SK-N-SH (cell line): ENCODE measurements at regions of chr17 and their contacts with region 1.

Region 1: GRCh38 chr17:54992797-54993639 is 24.5 kb downstream of the STXBP4 start:
- DNase-seq: peak; percentile 59
- H3K4me3 ChIP-seq: no peak overlapping the region
- H3K27ac ChIP-seq: no peak overlapping the region
- H3K4me1 ChIP-seq: no peaks in the 10 kb centered on the region; a peak in 1 of 4 replicates
- H3K27me3 ChIP-seq: no peaks in the 10 kb centered on the region
- CTCF ChIP-seq: peak; percentile 96
- EP300 ChIP-seq: no peak
- RAD21 ChIP-seq: peak; percentile 91

Region 2: GRCh38 chr17:54972406-54973138 is 20.4 kb before region 1 on chr17:
- CTCF ChIA-PET with region 1: interaction called, 18 read pairs
- POLR2A ChIA-PET with region 1: no interaction called
- DNase-seq: no peak
- H3K4me3 ChIP-seq: no peak overlapping the region
- H3K27ac ChIP-seq: peak overlapping the region in 1 of 2 experiments; percentile 29; a peak in 1 of 4 replicates
- H3K4me1 ChIP-seq: peaks cover 0 to 22% of the 10 kb centered on the region in 2 experiments; a peak in 2 of 4 replicates
- H3K27me3 ChIP-seq: no peaks in the 10 kb centered on the region
- CTCF ChIP-seq: no peak
- EP300 ChIP-seq: no peak
- RAD21 ChIP-seq: no peak

Region 3: GRCh38 chr17:55005520-55005919 is 12.5 kb after region 1 on chr17:
- CTCF ChIA-PET with region 1: interaction called, 62 read pairs
- POLR2A ChIA-PET with region 1: no interaction called
- DNase-seq: peak; percentile 20
- H3K4me3 ChIP-seq: no peak overlapping the region
- H3K27ac ChIP-seq: no peak overlapping the region
- H3K4me1 ChIP-seq: no peaks in the 10 kb centered on the region
- H3K27me3 ChIP-seq: no peaks in the 10 kb centered on the region
- CTCF ChIP-seq: peak; percentile 55
- EP300 ChIP-seq: no peak
- RAD21 ChIP-seq: peak; percentile 40

Region 4: GRCh38 chr17:55134486-55135157 is 141.6 kb after region 1 on chr17:
- CTCF ChIA-PET with region 1: no interaction called
- POLR2A ChIA-PET with region 1: no interaction called
- DNase-seq: no peak
- H3K4me3 ChIP-seq: no peak overlapping the region; a peak in 1 of 4 replicates
- H3K27ac ChIP-seq: peak overlapping the region; percentile 28 to 73; a peak in 3 of 4 replicates
- H3K4me1 ChIP-seq: no peaks in the 10 kb centered on the region; a peak in 1 of 4 replicates
- H3K27me3 ChIP-seq: no peaks in the 10 kb centered on the region
- CTCF ChIP-seq: no peak
- EP300 ChIP-seq: 0 out of 4 replicates have a peak, but pooled peaks of 1 of the 2 experiments have one; percentile 28
- RAD21 ChIP-seq: no peak

Region 5: DNA sequence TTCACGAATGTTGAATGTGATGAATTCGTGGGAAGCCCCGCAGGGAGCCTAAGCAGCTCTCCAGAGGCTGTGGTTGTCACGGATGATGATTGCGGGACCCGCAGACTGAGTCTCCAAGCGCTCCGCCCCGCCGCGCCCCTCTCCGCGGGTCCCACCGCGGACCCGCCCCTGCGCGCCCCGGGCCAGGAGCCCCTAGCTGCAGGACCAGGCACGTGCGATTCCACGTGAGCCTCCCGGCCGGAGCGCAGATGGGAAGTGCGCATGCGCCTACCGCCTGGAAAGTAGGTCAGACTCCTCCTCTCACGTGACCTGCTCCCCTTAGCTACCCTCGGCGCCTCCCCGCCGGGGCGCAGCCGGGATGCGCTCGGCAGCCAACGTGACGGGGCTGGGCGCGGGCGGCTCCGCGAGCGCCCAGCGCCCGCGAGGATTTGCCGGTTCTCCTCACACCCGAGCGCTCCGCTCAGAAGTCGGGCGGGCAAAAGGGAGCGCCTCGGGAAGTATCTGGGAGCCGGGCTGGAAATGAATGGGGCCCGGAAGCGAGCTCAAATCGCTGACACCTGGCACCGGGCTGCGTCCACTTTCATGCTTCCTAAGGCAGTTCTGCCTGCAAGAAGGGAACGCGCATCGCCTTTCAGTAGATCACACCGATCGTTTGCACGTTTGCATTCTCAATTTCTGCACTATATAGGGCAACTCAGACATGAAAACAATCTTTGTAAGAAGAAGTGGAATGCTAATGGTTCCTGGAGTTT is 245.3 kb after region 1 on chr17:
- CTCF ChIA-PET with region 1: interaction called, 22 read pairs
- POLR2A ChIA-PET with region 1: no interaction called
- DNase-seq: peak; percentile 100
- H3K4me3 ChIP-seq: peak overlapping the region; percentile 68 to 71
- H3K27ac ChIP-seq: peak overlapping the region; percentile 6 to 76; a peak in 3 of 4 replicates
- H3K4me1 ChIP-seq: peaks cover 0 to 9% of the 10 kb centered on the region in 2 experiments; a peak in 3 of 4 replicates
- H3K27me3 ChIP-seq: no peaks in the 10 kb centered on the region
- CTCF ChIP-seq: no peak
- EP300 ChIP-seq: no peak; a peak in 2 of 4 replicates
- RAD21 ChIP-seq: peak; percentile 13

Region 6: GRCh38 chr17:55295411-55296170 is 302.6 kb after region 1 on chr17:
- CTCF ChIA-PET with region 1: interaction called, 25 read pairs
- POLR2A ChIA-PET with region 1: no interaction called
- DNase-seq: peak; percentile 76
- H3K4me3 ChIP-seq: no peak overlapping the region
- H3K27ac ChIP-seq: no peak overlapping the region
- H3K4me1 ChIP-seq: peaks cover 0 to 2% of the 10 kb centered on the region in 2 experiments; a peak in 1 of 4 replicates
- H3K27me3 ChIP-seq: no peaks in the 10 kb centered on the region; the same call in 1 of the 2 replicates
- CTCF ChIP-seq: peak; percentile 96
- EP300 ChIP-seq: no peak
- RAD21 ChIP-seq: peak; percentile 95

Region 7: DNA sequence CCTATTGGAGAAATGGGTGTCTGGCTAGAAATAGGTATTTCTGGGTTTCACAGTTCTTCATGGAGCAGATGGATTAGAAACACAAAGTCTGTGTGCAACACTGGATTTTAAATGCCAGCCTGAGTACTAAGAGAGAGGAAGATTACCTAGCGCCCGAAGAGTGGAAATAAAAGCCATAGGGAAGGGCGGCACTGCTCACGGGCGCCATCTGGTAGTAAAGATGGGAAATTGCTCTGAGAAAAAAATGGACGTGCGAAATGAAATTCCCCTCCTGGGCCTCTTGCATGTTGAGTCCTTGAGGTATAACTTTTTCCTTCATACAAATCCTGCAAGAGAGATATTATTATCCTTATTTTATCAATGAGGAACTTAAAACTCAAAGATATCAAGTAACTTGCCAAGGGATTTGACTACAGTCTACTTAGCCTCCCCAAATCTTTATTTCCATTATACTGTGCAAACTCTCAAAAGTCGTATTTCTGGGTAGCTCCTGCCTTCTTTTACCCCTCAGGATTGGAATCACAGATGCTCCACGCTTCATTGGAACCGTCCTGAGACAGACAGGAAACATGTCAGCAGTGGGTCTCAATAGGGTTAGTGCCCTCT is 355.8 kb after region 1 on chr17:
- CTCF ChIA-PET with region 1: interaction called, 90 read pairs
- POLR2A ChIA-PET with region 1: no interaction called
- DNase-seq: peak; percentile 57
- H3K4me3 ChIP-seq: no peak overlapping the region
- H3K27ac ChIP-seq: no peak overlapping the region
- H3K4me1 ChIP-seq: peaks cover 0 to 2% of the 10 kb centered on the region in 2 experiments; a peak in 1 of 4 replicates
- H3K27me3 ChIP-seq: no peaks in the 10 kb centered on the region
- CTCF ChIP-seq: peak; percentile 98
- EP300 ChIP-seq: no peak
- RAD21 ChIP-seq: peak; percentile 91

Region 8: DNA sequence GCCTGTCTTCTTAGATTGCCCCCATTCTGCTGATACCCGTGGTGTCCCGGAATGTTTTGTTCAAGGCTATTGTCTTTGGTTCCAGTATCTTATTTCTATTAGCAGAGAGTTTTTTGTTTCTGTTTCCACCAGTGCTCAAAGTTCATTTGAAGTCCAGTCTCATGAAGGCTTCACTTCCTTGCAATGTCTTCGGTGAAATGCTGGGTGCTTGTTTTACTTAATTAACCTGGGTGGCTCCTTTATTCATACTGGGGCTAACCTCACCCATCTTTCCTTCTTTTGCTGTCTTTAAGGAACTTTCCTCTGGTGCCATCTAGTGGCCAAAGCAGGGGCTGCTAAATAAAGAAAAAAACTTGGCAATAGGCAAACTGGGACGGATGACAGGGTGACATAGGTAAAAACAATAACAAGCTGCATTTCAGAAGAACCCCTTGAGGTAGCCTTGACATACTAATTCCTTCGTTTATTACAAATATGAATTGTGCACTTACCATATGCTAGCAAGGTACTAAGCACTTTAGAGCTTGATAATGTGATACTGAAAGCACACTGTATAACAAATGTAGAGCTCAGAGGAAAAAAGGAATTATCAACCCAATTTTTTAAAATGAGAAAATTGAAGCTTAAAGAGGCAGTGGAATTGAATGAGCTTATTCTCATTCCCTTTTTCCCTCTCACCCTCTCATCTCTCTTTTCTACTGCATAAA is 521.0 kb after region 1 on chr17:
- CTCF ChIA-PET with region 1: interaction called, 23 read pairs
- POLR2A ChIA-PET with region 1: no interaction called
- DNase-seq: peak; percentile 73
- H3K4me3 ChIP-seq: peak overlapping the region in 1 of 2 experiments; percentile 13; a peak in 1 of 4 replicates
- H3K27ac ChIP-seq: no peak overlapping the region
- H3K4me1 ChIP-seq: peaks cover 0 to 4% of the 10 kb centered on the region in 2 experiments; a peak in 2 of 4 replicates
- H3K27me3 ChIP-seq: peaks cover 19% of the 10 kb centered on the region; the same call in 1 of the 2 replicates
- CTCF ChIP-seq: peak; percentile 100
- EP300 ChIP-seq: no peak; a peak in 1 of 4 replicates
- RAD21 ChIP-seq: peak; percentile 99